CD4-positive, alpha-beta memory T cell (primary cell): ENCODE measurements at regions of chr3 and their contacts with region 1.

Region 1: GRCh38 chr3:128426128-128426921 is 40.4 kb downstream of the DNAJB8 start:
- DNase-seq: peak in 4 of 5 donors; percentile 49 to 66 (median 52)
- H3K4me3 ChIP-seq: no peak overlapping the region
- H3K4me3 Mint-ChIP-seq: no peak overlapping the region
- H3K27ac ChIP-seq: no peak overlapping the region
- H3K27ac Mint-ChIP-seq: no peak overlapping the region
- H3K4me1 ChIP-seq: peaks cover 3% of the 10 kb centered on the region
- H3K4me1 Mint-ChIP-seq: peaks cover 0 to 6% (median 0%) of the 10 kb centered on the region in 4 donors
- H3K27me3 ChIP-seq: no peaks in the 10 kb centered on the region
- H3K27me3 Mint-ChIP-seq: peaks cover 13 to 17% of the 10 kb centered on the region in 2 donors

Region 2: DNA sequence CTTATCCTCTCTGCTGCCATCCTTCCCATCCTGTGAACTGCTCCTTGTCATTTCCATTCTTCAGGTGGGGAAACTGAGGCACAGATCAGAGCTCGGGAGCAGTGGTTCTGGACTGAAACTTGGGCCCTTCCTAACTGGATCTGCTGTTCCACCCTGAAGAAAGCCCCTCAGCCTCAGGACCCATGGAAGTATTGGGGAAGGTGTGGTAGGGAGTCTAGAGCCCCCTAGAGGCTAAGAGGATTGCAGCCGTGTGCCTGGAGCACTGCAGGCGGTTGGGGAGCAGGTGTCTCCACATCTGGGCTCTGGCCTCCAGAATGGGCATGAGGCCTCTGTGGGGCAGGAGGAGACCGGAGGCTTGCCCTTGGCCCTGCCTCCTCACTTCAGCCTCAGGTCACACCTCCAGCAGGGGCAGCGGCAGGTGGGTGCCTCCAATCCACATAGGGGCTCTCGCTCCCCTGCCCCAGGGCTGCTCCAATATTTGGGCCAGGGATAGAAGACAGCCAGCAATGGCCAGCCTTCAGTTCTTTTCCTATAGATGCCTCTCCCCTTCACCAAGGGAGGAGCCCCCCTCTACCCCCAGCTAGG is 12.3 kb after region 1 on chr3:
- CTCF ChIA-PET with region 1: interaction called, 13 read pairs
- POLR2A ChIA-PET with region 1: no interaction called
- intact Hi-C with region 1: no loop called
- DNase-seq: no peak
- H3K4me3 ChIP-seq: no peak overlapping the region
- H3K4me3 Mint-ChIP-seq: no peak overlapping the region
- H3K27ac ChIP-seq: no peak overlapping the region
- H3K27ac Mint-ChIP-seq: no peak overlapping the region
- H3K4me1 ChIP-seq: no peaks in the 10 kb centered on the region
- H3K4me1 Mint-ChIP-seq: no peaks in the 10 kb centered on the region
- H3K27me3 ChIP-seq: no peaks in the 10 kb centered on the region
- H3K27me3 Mint-ChIP-seq: peaks cover 12 to 28% of the 10 kb centered on the region in 2 donors

Region 3: GRCh38 chr3:128497387-128498126 is 71.2 kb after region 1 on chr3:
- CTCF ChIA-PET with region 1: interaction called, 58 read pairs
- POLR2A ChIA-PET with region 1: no interaction called
- intact Hi-C with region 1: loop called (anchors 1 kb)
- DNase-seq: peak; percentile 62 to 71 (median 66)
- H3K4me3 ChIP-seq: peak overlapping the region in 1 of 2 donors; percentile 17
- H3K4me3 Mint-ChIP-seq: peak overlapping the region; percentile 72 to 89 (median 80)
- H3K27ac ChIP-seq: no peak overlapping the region
- H3K27ac Mint-ChIP-seq: peak overlapping the region in 1 of 7 donors; percentile 47
- H3K4me1 ChIP-seq: peaks cover 9% of the 10 kb centered on the region
- H3K4me1 Mint-ChIP-seq: peaks cover 2 to 26% (median 6%) of the 10 kb centered on the region in 4 donors
- H3K27me3 ChIP-seq: peaks cover 17% of the 10 kb centered on the region
- H3K27me3 Mint-ChIP-seq: peaks cover 37 to 55% of the 10 kb centered on the region in 2 donors